HCT116 (cell line): ENCODE measurements at regions of chr14 and their contacts with region 1.

Region 1: DNA sequence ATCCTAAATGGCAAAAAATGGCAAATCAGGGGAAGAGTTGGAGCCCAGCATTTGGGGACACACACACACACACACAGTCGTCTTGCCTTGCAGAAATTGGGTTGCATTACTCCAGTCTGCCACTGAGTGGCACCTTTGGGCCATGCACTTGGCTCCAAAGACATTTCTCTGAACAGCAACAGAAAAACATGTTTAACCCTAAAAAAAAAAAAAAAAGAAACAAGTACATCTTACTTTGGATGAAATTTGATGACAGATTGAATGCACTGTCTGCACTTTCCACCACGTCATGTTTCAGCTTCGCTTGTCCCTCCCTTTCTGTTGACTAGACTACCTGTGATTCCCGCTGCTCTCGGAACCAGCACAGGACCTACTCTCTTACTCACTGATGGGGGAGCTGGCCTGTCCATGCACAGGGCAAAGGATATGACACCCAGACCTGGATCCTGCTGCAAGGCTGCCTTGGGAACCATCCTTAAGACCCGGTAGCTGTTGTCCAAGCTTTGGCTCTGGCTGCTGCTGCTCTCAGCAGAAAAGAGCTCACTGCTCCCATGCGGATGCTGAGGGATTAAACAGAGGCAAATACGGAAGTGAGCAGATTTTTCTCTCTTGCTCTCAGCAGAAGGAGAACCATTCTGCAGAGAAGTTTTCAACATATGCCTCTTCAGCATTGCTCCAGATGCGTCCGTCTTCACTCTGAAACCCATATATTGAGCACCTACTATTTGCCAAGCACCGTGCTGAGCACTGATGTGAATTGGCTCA is 376.8 kb downstream of the DPF3 start:
- DNase-seq: peak; percentile 39
- ATAC-seq: peak; percentile 78
- H3K4me3 ChIP-seq: no peak overlapping the region
- H3K27ac ChIP-seq: no peak overlapping the region
- H3K4me1 ChIP-seq: no peaks in the 10 kb centered on the region
- H3K27me3 ChIP-seq: no peaks in the 10 kb centered on the region
- CTCF ChIP-seq: peak; percentile 80 to 85 (median 80)
- POLR2A ChIP-seq: no peak
- RAD21 ChIP-seq: peak; percentile 92

Region 2: DNA sequence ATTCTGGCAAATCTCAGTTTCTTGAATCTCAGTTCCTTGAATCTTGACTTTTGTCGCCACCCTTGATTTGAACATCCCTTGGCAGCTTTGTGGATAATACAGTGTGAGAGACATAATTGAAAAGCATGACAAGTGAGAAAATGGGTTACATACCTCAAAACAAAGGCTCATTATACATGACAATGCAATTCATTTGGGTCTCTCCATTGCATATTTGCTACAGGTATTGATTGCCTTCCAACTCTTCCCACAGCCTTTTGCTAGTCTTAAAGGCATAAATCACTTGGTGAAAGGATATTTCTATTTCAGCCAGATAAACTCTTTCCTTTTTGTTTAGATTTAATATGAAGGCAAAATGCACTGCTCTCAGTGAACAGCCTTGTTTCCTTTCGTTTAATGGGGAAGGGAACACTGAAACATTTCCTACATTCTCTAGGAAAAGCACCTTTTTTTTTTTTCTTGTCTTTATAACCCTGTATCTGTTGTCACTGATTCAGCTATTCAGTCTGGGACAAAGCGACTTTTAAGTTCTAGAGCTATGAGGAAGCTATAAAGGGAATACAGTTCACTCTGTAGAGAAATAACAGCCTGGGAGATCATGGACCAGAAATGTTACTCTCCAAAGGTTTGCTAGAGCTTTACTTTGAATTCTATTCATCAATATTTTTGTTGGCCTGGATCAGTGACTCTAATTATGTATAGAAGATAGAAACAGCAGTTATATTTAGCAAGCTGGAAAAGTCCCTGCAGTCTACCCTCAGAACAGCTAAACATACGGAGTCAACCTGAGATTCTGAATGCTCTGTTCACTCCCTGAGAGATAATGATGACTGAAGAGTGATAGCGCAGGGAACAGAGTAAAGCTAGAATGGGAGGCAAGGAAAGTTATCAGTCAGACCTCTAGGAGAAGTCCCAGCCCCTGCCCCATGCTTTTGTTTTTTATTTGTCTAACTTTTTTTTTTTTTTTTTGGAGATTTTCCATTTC is 273.5 kb before region 1 on chr14:
- CTCF ChIA-PET with region 1: no interaction called
- POLR2A ChIA-PET with region 1: no interaction called
- RAD21 ChIA-PET with region 1: no interaction called
- intact Hi-C with region 1: no loop called
- DNase-seq: no peak
- ATAC-seq: no peak
- H3K4me3 ChIP-seq: no peak overlapping the region
- H3K27ac ChIP-seq: no peak overlapping the region
- H3K4me1 ChIP-seq: no peaks in the 10 kb centered on the region
- H3K27me3 ChIP-seq: no peaks in the 10 kb centered on the region
- CTCF ChIP-seq: no peak
- POLR2A ChIP-seq: no peak
- RAD21 ChIP-seq: no peak

Region 3: GRCh38 chr14:72503696-72504368 is 13.3 kb before region 1 on chr14:
- CTCF ChIA-PET with region 1: interaction called, 14 read pairs
- POLR2A ChIA-PET with region 1: no interaction called
- RAD21 ChIA-PET with region 1: no interaction called
- intact Hi-C with region 1: no loop called
- DNase-seq: peak; percentile 8
- ATAC-seq: peak; percentile 68
- H3K4me3 ChIP-seq: no peak overlapping the region
- H3K27ac ChIP-seq: no peak overlapping the region
- H3K4me1 ChIP-seq: peaks cover 5 to 13% of the 10 kb centered on the region in 2 experiments; a peak in 3 of 4 replicates
- H3K27me3 ChIP-seq: no peaks in the 10 kb centered on the region
- CTCF ChIP-seq: no peak
- POLR2A ChIP-seq: no peak
- RAD21 ChIP-seq: no peak

Region 4: GRCh38 chr14:72893636-72894321 is 376.7 kb after region 1 on chr14 and contains the start of gene DPF3:
- CTCF ChIA-PET with region 1: interaction called, 10 read pairs
- POLR2A ChIA-PET with region 1: interaction called, 4 read pairs
- RAD21 ChIA-PET with region 1: interaction called, 3 to 5 read pairs
- intact Hi-C with region 1: no loop called
- DNase-seq: peak; percentile 91
- ATAC-seq: peak; percentile 96
- H3K4me3 ChIP-seq: peak within 1 kb of the TSS; percentile 73 to 74
- H3K27ac ChIP-seq: 0 out of 2 replicates have a peak within 1 kb of the TSS, but pooled peaks have one; percentile 17
- H3K4me1 ChIP-seq: peaks cover 9 to 23% of the 10 kb centered on the region in 2 experiments; a peak in 2 of 4 replicates
- H3K27me3 ChIP-seq: peaks cover 9% of the 10 kb centered on the region; the same call in 1 of the 2 replicates
- CTCF ChIP-seq: no peak
- POLR2A ChIP-seq: no peak
- RAD21 ChIP-seq: no peak
- total RNA-seq, gene DPF3: 0.27 TPM

Region 5: DNA sequence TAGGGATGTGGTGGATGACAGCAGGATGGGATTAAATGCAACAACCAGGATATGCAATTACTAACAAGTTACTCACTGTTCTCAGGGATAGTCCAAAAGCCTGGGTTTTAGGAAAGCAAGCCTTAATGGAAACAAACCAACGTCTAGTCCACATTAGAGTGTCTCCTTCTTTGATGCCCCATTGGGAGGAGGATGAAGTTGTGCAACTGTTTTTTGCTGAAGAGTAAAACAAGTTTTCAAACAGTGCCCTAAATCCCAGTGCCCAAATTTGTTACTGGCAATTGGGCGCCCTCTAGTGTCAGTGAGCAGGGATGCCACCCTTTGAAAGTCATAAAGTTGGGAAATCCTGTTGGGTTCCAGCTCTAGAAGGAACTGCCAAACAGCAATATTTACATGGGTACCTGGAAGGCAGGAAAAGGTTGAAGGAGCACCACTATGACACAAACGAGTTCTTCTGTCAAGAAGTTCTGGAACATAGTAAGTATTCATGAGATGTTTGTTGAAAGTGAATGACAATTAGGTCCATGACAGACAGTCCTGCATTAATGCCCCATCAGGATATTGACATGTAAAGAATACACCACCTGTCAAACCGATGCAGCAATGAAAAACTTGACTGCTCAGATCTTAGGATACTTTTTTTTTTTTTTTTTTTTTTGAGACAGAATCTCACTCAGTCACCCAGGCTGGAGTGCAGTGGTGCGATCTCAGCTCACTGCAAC is 387.9 kb after region 1 on chr14:
- CTCF ChIA-PET with region 1: interaction called, 89 read pairs
- POLR2A ChIA-PET with region 1: no interaction called
- RAD21 ChIA-PET with region 1: interaction called, 4 to 6 read pairs
- intact Hi-C with region 1: loop called (anchors 1 kb)
- DNase-seq: peak; percentile 44
- ATAC-seq: peak; percentile 63
- H3K4me3 ChIP-seq: no peak overlapping the region
- H3K27ac ChIP-seq: no peak overlapping the region
- H3K4me1 ChIP-seq: peaks cover 3 to 25% of the 10 kb centered on the region in 2 experiments
- H3K27me3 ChIP-seq: no peaks in the 10 kb centered on the region
- CTCF ChIP-seq: peak; percentile 82 to 97 (median 93); a peak in 5 of 6 replicates
- POLR2A ChIP-seq: no peak
- RAD21 ChIP-seq: peak; percentile 96

Region 6: GRCh38 chr14:72948481-72949138 is 431.5 kb after region 1 on chr14:
- CTCF ChIA-PET with region 1: interaction called, 41 read pairs
- POLR2A ChIA-PET with region 1: no interaction called
- RAD21 ChIA-PET with region 1: interaction called, 4 to 6 read pairs
- intact Hi-C with region 1: loop called (anchors 1 kb)
- DNase-seq: peak; percentile 27
- ATAC-seq: peak; percentile 85
- H3K4me3 ChIP-seq: no peak overlapping the region
- H3K27ac ChIP-seq: no peak overlapping the region
- H3K4me1 ChIP-seq: no peaks in the 10 kb centered on the region
- H3K27me3 ChIP-seq: no peaks in the 10 kb centered on the region
- CTCF ChIP-seq: peak; percentile 59 to 89 (median 84); a peak in 5 of 6 replicates
- POLR2A ChIP-seq: no peak
- RAD21 ChIP-seq: peak; percentile 63

Region 7: GRCh38 chr14:73472185-73473114 is 955.3 kb after region 1 on chr14:
- CTCF ChIA-PET with region 1: interaction called, 6 read pairs
- POLR2A ChIA-PET with region 1: no interaction called
- RAD21 ChIA-PET with region 1: no interaction called
- intact Hi-C with region 1: loop called (anchors 5 kb)
- DNase-seq: peak; percentile 60
- ATAC-seq: peak; percentile 89
- H3K4me3 ChIP-seq: no peak overlapping the region
- H3K27ac ChIP-seq: no peak overlapping the region
- H3K4me1 ChIP-seq: no peaks in the 10 kb centered on the region
- H3K27me3 ChIP-seq: no peaks in the 10 kb centered on the region
- CTCF ChIP-seq: peak; percentile 54 to 78 (median 75)
- POLR2A ChIP-seq: no peak
- RAD21 ChIP-seq: peak; percentile 93